IMR-90 (cell line): ENCODE measurements at regions of chr14 and their contacts with region 1.

Region 1: GRCh38 chr14:31561155-31561846 is at the start of gene NUBPL:
- DNase-seq: peak; percentile 93
- ATAC-seq: peak; percentile 95
- H3K4me3 ChIP-seq: peak within 1 kb of the TSS; percentile 92
- H3K27ac ChIP-seq: peak within 1 kb of the TSS; percentile 87
- H3K4me1 ChIP-seq: no peaks in the 10 kb centered on the region; the same call in 1 of the 2 replicates
- H3K27me3 ChIP-seq: no peaks in the 10 kb centered on the region; the same call in 1 of the 2 replicates
- CTCF ChIP-seq: no peak
- POLR2A ChIP-seq: peak; percentile 59; the same call in 1 of the 2 replicates
- RAD21 ChIP-seq: no peak
- total RNA-seq, gene NUBPL: 11.5 and 15.6 TPM in 2 replicates

Region 2: GRCh38 chr14:31038521-31039166 is 522.7 kb before region 1 on chr14:
- CTCF ChIA-PET with region 1: no interaction called
- POLR2A ChIA-PET with region 1: interaction called, 12 read pairs
- dilution Hi-C with region 1: no loop called
- in situ Hi-C with region 1: no loop called
- intact Hi-C with region 1: no loop called
- DNase-seq: no peak
- ATAC-seq: no peak
- H3K4me3 ChIP-seq: no peak overlapping the region
- H3K27ac ChIP-seq: no peak overlapping the region
- H3K4me1 ChIP-seq: no peaks in the 10 kb centered on the region
- H3K27me3 ChIP-seq: no peaks in the 10 kb centered on the region
- CTCF ChIP-seq: no peak
- POLR2A ChIP-seq: no peak
- RAD21 ChIP-seq: no peak

Region 3: GRCh38 chr14:31510222-31510621 is 51.1 kb before region 1 on chr14:
- CTCF ChIA-PET with region 1: no interaction called
- POLR2A ChIA-PET with region 1: interaction called, 10 read pairs
- dilution Hi-C with region 1: no loop called
- in situ Hi-C with region 1: no loop called
- intact Hi-C with region 1: no loop called
- DNase-seq: peak; percentile 10
- ATAC-seq: no peak
- H3K4me3 ChIP-seq: no peak overlapping the region
- H3K27ac ChIP-seq: no peak overlapping the region
- H3K4me1 ChIP-seq: peaks cover 5% of the 10 kb centered on the region
- H3K27me3 ChIP-seq: peaks cover 3% of the 10 kb centered on the region; the same call in 1 of the 2 replicates
- CTCF ChIP-seq: peak; percentile 55
- POLR2A ChIP-seq: no peak
- RAD21 ChIP-seq: peak; percentile 58

Region 4: GRCh38 chr14:31543969-31544799 is 17.1 kb before region 1 on chr14:
- CTCF ChIA-PET with region 1: no interaction called
- POLR2A ChIA-PET with region 1: no interaction called
- dilution Hi-C with region 1: no loop called
- in situ Hi-C with region 1: no loop called
- intact Hi-C with region 1: no loop called
- DNase-seq: peak; percentile 23
- ATAC-seq: peak; percentile 77
- H3K4me3 ChIP-seq: no peak overlapping the region
- H3K27ac ChIP-seq: no peak overlapping the region
- H3K4me1 ChIP-seq: no peaks in the 10 kb centered on the region
- H3K27me3 ChIP-seq: peaks cover 3% of the 10 kb centered on the region
- CTCF ChIP-seq: peak; percentile 39
- POLR2A ChIP-seq: no peak
- RAD21 ChIP-seq: peak; percentile 47